Esophagus muscularis mucosa (tissue), 4 donors: ENCODE measurements at regions of chr5 and their contacts with region 1.

Region 1: DNA sequence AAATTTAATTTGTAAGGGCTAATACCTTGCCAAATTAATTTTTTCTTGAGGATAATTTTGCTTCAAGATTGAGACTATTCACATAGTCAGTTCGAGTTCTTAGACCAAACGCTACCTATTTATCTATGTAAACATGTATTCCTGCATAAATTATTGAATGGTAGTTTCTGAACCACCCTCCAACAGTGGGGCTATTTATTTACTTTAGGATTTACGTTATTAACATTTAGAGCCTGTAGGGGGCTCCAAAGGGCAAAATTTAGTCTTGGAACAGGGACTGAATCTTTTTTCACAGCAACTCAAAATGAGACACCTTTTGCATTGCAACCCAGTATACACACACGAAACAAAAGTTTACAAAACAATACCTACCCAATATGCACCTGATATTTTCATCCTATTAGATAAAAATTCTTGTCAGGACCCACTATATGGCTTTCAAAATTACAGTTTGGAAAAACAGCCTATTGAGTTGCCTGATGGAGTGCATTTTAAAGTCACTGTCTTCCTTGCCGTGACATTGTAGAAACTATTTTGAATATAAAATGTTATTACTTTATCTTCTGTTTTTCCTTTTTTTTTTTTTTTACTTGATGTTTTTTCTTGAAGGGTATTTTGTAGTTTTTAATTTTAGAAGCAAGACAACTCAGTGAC is 47.1 kb upstream of the POU4F3 start:
- DNase-seq: no peak
- H3K4me3 ChIP-seq: no peak overlapping the region
- H3K27ac ChIP-seq: no peak overlapping the region
- H3K4me1 ChIP-seq: no peaks in the 10 kb centered on the region
- H3K27me3 ChIP-seq: no peaks in the 10 kb centered on the region
- CTCF ChIP-seq: peak; percentile 43 to 55 (median 51)
- EP300 ChIP-seq: no peak
- POLR2A ChIP-seq: no peak

Region 2: GRCh38 chr5:146151970-146152369 is 139.6 kb before region 1 on chr5:
- intact Hi-C with region 1: no loop called
- DNase-seq: no peak
- H3K4me3 ChIP-seq: no peak overlapping the region
- H3K27ac ChIP-seq: no peak overlapping the region
- H3K4me1 ChIP-seq: no peaks in the 10 kb centered on the region
- H3K27me3 ChIP-seq: no peaks in the 10 kb centered on the region
- CTCF ChIP-seq: no peak
- EP300 ChIP-seq: no peak
- POLR2A ChIP-seq: no peak

Region 3: DNA sequence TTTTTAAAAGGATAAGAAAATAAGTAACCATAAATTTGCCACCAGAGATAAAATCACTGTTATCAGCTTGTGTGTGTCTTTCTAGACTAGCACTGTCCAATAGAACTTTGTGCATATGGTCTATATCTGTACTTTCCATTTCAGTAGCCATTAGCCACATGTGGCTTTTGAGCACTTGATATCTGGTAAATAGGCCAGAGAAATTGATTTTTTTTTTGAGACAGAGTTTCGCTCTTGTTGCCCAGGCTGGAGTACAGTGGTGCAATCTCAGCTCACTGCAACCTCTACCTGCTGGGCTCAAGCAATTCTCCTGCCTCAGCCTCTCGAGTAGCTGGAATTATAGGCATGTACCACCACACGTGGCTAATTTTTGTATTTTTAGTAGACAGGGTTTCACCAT is 70.3 kb before region 1 on chr5:
- intact Hi-C with region 1: no loop called
- DNase-seq: no peak
- H3K4me3 ChIP-seq: no peak overlapping the region
- H3K27ac ChIP-seq: no peak overlapping the region
- H3K4me1 ChIP-seq: peaks cover 0 to 8% (median 6%) of the 10 kb centered on the region in 4 donors
- H3K27me3 ChIP-seq: no peaks in the 10 kb centered on the region
- CTCF ChIP-seq: no peak
- EP300 ChIP-seq: no peak
- POLR2A ChIP-seq: no peak

Region 4: DNA sequence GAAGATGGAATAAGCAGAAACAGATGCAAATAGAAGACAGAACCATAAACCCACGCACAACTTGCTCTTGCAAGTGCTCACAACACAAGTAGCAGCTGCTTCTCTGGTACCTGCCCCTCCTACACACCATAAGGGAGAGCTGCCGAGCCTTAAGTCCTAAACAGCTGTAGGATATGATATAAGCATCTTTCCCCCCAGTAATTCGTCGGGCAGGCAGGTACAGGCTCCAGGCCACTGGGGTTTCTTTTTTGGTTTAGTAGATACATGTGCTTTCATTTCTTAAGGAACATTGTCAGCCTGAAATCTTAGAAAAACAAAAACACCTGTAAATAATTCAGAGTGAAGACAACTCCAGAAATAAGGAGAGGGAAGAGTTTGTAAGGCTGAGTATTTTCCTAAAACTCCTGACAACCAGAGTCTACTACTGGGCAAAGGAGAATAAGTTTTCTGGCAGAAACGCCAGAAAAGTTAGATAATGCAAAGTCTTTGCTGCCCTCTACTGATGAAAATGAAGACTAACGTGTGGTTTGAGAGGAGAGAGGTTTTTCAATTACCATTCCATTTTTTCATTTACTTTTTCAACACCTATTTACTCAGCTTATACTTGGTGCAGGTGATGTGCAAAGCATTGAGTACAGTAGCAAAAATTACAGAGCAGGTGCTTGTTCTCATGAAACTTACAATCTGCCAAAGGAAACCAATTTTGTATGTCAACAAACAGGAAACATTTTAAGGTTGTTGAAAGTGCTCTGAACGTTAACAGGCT is 135.5 kb after region 1 on chr5:
- intact Hi-C with region 1: loop called (anchors 5 kb)
- DNase-seq: no peak
- H3K4me3 ChIP-seq: no peak overlapping the region
- H3K27ac ChIP-seq: no peak overlapping the region
- H3K4me1 ChIP-seq: peaks cover 0 to 5% (median 2%) of the 10 kb centered on the region in 4 donors
- H3K27me3 ChIP-seq: peaks cover 0 to 20% (median 0%) of the 10 kb centered on the region in 4 donors
- CTCF ChIP-seq: peak; percentile 54 to 72 (median 62)
- EP300 ChIP-seq: no peak
- POLR2A ChIP-seq: no peak